PC-9 (cell line): ENCODE measurements at regions of chr1 and their contacts with region 1.

Region 1: DNA sequence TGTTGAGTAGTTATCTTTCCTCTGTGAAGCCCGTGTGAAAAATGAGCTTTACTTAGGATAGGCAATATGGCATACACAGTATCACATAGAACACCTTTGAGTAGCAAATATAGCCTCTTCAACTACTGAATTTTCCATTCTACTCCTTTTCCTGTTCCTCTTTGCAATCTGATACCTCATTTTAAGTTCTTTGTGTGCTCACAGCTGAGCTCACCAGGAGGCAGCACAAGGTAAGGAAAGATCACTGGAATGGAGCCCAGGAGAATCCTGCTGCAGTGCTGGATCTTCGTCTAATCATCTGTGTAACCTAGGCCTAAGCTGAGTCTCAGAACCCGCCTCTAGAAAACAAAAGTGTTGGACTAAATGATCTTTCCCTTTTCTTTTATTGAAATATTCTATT is 171.0 kb downstream of the LRRC40 start:
- DNase-seq: peak in 1 of 2 experiments; percentile 43
- H3K4me3 ChIP-seq: no peak overlapping the region
- H3K27ac ChIP-seq: no peak overlapping the region
- H3K4me1 ChIP-seq: no peaks in the 10 kb centered on the region
- H3K27me3 ChIP-seq: no peaks in the 10 kb centered on the region
- CTCF ChIP-seq: no peak; the same call in 1 of the 2 replicates

Region 2: GRCh38 chr1:70134148-70134547 is 99.7 kb after region 1 on chr1:
- CTCF ChIA-PET with region 1: no interaction called
- POLR2A ChIA-PET with region 1: no interaction called
- intact Hi-C with region 1: loop called (anchors 2 kb)
- DNase-seq: no peak
- H3K4me3 ChIP-seq: no peak overlapping the region
- H3K27ac ChIP-seq: no peak overlapping the region
- H3K4me1 ChIP-seq: no peaks in the 10 kb centered on the region
- H3K27me3 ChIP-seq: no peaks in the 10 kb centered on the region
- CTCF ChIP-seq: no peak

Region 3: DNA sequence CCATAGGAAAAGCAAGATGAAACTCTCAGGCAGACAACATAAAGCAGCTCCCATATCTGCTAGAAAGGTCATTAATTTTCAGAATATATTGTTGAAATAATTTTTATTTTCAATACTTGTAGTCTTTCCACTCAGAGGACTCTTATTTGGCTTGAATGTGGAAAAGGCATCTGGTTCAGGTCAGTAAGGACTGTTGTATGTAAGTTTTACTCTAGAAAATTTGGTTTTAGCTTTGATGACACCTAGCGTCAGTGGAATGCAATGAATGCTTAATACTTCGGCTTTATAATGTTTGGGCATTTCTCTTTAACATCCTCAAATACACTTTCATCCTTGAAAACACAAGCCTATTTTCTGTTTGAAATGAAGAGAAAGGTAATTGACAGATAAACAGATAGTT is 107.7 kb after region 1 on chr1:
- CTCF ChIA-PET with region 1: no interaction called
- POLR2A ChIA-PET with region 1: no interaction called
- intact Hi-C with region 1: loop called (anchors 1 kb)
- DNase-seq: no peak
- H3K4me3 ChIP-seq: no peak overlapping the region
- H3K27ac ChIP-seq: no peak overlapping the region
- H3K4me1 ChIP-seq: peaks cover 8% of the 10 kb centered on the region; the same call in 1 of the 2 replicates
- H3K27me3 ChIP-seq: no peaks in the 10 kb centered on the region
- CTCF ChIP-seq: no peak

Region 4: GRCh38 chr1:70475023-70475422 is 440.6 kb after region 1 on chr1:
- CTCF ChIA-PET with region 1: no interaction called
- POLR2A ChIA-PET with region 1: no interaction called
- intact Hi-C with region 1: no loop called
- DNase-seq: no peak
- H3K4me3 ChIP-seq: no peak overlapping the region
- H3K27ac ChIP-seq: no peak overlapping the region
- H3K4me1 ChIP-seq: no peaks in the 10 kb centered on the region
- H3K27me3 ChIP-seq: no peaks in the 10 kb centered on the region
- CTCF ChIP-seq: no peak

Region 5: GRCh38 chr1:70509996-70510876 is 475.8 kb after region 1 on chr1:
- CTCF ChIA-PET with region 1: no interaction called
- POLR2A ChIA-PET with region 1: no interaction called
- intact Hi-C with region 1: loop called (anchors 2 kb)
- DNase-seq: peak; percentile 3 to 95
- H3K4me3 ChIP-seq: no peak overlapping the region
- H3K27ac ChIP-seq: peak overlapping the region; percentile 52
- H3K4me1 ChIP-seq: peaks cover 7% of the 10 kb centered on the region
- H3K27me3 ChIP-seq: no peaks in the 10 kb centered on the region
- CTCF ChIP-seq: peak; percentile 86